WTC11 (cell line): ENCODE measurements at regions of chr5 and their contacts with region 1.

Region 1: DNA sequence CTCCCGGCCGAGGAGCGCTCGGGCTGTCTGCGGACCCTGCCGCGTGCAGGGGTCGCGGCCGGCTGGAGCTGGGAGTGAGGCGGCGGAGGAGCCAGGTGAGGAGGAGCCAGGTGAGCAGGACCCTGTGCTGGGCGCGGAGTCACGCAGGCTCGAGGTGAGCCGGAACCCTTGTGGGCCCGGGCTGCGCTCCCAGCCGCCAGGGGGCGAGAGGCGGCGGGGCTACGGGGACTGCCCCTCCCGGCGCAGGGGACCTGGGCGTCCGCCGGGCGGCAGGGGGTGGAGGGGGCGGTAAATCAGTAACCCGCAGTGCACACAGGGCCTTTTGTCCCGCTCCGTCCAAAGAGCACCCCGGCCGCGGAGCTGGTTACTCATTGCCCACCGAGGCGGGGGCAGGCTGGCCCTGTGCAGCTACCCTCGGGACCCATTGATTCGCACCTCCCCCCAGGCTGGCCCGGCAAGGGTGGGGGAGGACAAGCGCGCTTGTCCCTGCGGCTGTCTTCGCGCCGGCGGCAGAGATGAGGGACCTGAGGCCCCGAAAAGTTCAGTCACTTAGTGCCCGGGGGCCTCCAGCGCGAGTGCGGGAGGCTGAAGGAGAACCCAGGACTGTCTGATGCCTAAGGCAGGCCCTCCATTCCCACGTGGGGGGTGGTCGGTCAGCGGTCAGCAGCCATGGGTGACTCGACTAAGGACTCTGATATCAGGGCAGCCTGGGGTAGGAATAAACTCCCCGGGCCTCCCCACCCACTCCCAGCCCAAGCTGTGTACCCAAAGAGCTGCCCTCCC is 400 bp downstream of the FGFR4 start:
- DNase-seq: peak; percentile 81
- ATAC-seq: peak; percentile 69
- H3K4me3 Mint-ChIP-seq: peak overlapping the region; percentile 80
- H3K27ac Mint-ChIP-seq: no peak overlapping the region
- H3K4me1 Mint-ChIP-seq: peaks cover 37% of the 10 kb centered on the region
- H3K27me3 Mint-ChIP-seq: no peaks in the 10 kb centered on the region; the same call in 1 of the 2 replicates
- CTCF ChIP-seq: peak; percentile 68; the same call in 1 of the 2 replicates

Region 2: DNA sequence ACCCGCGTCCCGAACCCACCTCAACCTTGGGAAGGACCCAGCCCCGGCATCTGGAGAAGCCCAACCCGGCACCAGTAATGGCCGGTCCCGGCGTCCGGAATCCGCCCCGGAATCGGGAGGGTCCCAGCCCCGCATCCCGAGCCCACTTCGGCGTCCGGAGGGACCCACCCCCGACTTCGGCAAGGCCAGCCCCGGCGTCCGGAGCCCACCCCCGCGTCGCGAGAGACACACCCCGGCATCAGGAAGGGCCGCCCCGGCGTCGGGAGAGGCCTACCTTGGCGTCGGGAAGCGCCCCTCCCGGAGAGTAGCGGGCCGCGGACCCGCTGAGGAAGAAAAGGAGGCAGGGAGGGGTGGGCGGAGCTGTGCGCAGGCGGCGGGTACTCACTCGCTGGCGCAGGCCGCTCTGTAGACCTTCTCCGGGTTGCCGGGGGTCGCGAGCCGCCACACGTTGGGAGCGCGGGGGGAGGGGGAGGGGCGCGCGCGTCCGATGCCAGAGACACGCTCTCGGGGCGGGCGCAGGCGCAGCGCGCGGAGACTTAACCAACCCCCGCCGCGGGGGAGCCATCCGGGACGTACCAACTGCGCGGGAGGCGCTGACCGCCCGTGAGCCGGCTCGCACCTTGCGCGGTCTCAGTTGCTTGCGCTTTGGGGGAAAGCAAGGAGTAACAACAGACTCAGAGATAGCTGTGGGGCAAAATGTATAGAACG is 80.7 kb before region 1 on chr5 and contains the start of gene UIMC1:
- CTCF ChIA-PET with region 1: interaction called, 13 read pairs
- POLR2A ChIA-PET with region 1: interaction called, 3 read pairs
- DNase-seq: peak; percentile 94
- ATAC-seq: peak; percentile 86
- H3K4me3 Mint-ChIP-seq: peak within 1 kb of the TSS; percentile 94
- H3K27ac Mint-ChIP-seq: peak within 1 kb of the TSS; percentile 89
- H3K4me1 Mint-ChIP-seq: peaks cover 26% of the 10 kb centered on the region
- H3K27me3 Mint-ChIP-seq: peaks cover 5% of the 10 kb centered on the region; the same call in 1 of the 2 replicates
- CTCF ChIP-seq: no peak
- total RNA-seq, gene UIMC1: 44.4 to 48.0 TPM (median 46.1 TPM) in 3 replicates

Region 3: DNA sequence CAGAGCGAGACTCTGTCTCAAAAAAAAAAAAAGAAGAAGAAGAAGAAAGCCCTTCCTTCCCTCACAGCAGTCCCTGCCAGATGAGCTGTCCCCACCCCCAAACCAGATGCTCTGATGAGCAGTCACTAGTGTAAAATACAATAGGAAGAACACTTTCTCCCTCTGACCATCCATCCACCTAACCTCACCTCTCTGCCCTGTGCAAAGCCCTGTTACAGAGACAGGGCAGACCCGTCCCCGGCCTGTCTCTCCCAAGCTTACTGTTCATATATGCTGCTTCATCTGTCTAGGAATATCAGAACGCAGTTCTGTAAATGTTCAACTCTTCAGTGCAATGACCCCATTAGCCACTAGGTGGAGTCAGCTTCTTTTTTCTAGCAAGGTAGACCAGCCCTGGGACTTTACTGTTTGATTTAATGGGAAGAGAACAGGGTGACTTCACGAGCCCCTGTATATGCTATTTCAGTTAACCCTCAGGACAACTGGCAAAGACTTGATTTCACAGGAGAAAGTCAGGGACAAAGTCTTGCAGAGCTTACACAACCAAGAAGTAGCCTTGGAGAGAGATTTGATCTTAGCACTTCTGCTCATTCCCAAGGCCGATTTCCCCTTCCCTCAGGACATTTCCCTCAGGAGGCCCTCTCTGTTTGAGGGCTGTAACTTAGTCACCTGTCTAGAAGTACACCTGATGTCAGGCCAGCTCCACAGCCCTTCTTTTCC is 15.3 kb before region 1 on chr5:
- CTCF ChIA-PET with region 1: interaction called, 124 read pairs
- POLR2A ChIA-PET with region 1: no interaction called
- DNase-seq: peak; percentile 76
- ATAC-seq: peak; percentile 91
- H3K4me3 Mint-ChIP-seq: peak overlapping the region; percentile 8
- H3K27ac Mint-ChIP-seq: peak overlapping the region; percentile 22
- H3K4me1 Mint-ChIP-seq: peaks cover 3% of the 10 kb centered on the region
- H3K27me3 Mint-ChIP-seq: no peaks in the 10 kb centered on the region; the same call in 1 of the 2 replicates
- CTCF ChIP-seq: peak; percentile 88

Region 4: DNA sequence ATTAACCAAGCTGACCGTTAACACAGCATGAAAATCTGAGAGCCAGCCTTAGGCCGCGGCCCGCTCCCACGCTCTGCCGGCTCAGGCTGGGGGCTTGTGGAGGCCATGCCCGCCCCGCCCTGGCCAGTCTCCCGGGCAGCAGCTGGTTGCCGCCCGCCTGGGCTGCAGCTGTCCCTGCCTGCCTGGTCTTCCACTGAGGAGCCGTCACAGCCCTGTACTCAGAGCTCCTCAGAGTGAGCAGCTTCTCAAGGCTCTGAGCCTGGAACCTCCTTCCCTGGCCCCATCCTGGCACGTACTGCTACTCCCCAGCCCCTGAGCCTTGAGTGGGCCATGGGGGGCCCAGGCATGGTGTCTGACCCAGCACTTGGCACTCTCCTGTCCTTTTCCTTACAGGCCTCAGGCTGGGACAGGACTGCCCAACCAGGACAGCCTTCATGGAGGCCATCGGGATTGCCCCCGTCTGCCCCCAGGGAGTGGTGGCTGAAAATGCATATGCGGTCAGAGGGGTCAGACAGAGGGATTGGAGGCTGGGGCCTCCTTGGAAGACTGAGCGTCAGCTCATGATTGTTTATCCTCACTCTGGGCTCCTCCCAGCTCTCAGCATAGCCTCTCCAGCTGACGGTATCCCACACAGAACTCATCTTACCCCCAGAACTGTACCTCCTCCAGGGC is 11.5 kb after region 1 on chr5:
- CTCF ChIA-PET with region 1: interaction called, 59 read pairs
- POLR2A ChIA-PET with region 1: interaction called, 3 read pairs
- DNase-seq: no peak
- ATAC-seq: no peak; the same call in 1 of the 2 replicates
- H3K4me3 Mint-ChIP-seq: no peak overlapping the region
- H3K27ac Mint-ChIP-seq: peak overlapping the region; percentile 70
- H3K4me1 Mint-ChIP-seq: peaks cover 21% of the 10 kb centered on the region
- H3K27me3 Mint-ChIP-seq: no peaks in the 10 kb centered on the region; the same call in 1 of the 2 replicates
- CTCF ChIP-seq: no peak

Region 5: GRCh38 chr5:177124486-177124991 is 37.4 kb after region 1 on chr5:
- CTCF ChIA-PET with region 1: interaction called, 11 read pairs
- POLR2A ChIA-PET with region 1: no interaction called
- DNase-seq: peak; percentile 55
- ATAC-seq: peak; percentile 99
- H3K4me3 Mint-ChIP-seq: no peak overlapping the region
- H3K27ac Mint-ChIP-seq: peak overlapping the region; percentile 70; the same call in 1 of the 2 replicates
- H3K4me1 Mint-ChIP-seq: peaks cover 11% of the 10 kb centered on the region
- H3K27me3 Mint-ChIP-seq: peaks cover 5% of the 10 kb centered on the region; the same call in 1 of the 2 replicates
- CTCF ChIP-seq: no peak